GM13977 (cell line): ENCODE measurements at regions of chr3 and their contacts with region 1.

Region 1: GRCh38 chr3:100590114-100590839 is 19.1 kb upstream of the ADGRG7 start:
- DNase-seq: peak; percentile 72
- CTCF ChIP-seq: peak; percentile 75

Region 2: GRCh38 chr3:99842826-99843589 is 747.3 kb before region 1 on chr3:
- in situ Hi-C with region 1: loop called (anchors 25 kb)
- DNase-seq: no peak
- CTCF ChIP-seq: peak; percentile 64

Region 3: DNA sequence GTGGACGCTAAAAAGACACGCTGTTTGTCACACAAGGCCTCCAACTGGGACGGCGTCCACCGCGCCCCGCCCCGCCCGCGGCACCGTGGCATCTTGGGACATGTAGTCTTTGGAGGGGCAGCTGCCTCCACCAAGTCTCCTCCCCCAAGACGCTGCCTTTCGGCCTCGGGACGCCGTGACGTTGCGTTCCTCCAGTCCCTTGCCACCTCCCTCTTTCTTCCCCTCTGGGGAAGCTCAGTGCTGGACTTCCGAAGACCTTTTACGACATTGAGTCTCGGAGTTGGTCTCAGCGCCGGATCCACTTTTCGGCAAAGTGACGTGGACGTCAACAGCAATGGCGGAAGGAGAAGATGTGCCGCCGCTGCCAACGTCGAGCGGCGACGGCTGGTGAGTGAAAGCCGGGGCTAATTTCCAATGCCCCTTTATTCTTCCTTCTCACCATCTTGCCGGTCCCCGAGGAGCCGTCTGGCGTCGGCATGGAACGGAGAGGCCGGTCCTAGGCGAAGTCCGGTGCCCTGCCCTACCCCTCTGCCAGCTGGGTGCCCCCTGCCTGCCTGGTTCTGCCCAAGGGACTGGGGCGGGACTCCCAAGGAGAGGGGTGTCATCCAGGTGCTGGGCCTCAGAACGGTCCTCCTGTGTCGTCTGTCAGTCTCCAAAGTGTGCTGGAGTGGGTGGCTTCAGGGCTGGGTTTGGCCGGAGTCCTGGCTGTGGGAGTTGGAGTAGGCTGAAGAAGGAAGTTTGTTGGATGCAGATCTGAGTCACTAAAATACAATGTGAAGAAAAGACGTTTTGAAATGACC is 329.4 kb before region 1 on chr3 and contains the start of gene TBC1D23:
- in situ Hi-C with region 1: no loop called
- DNase-seq: peak; percentile 95
- CTCF ChIP-seq: no peak

Region 4: GRCh38 chr3:100316641-100317069 is 273.6 kb before region 1 on chr3:
- in situ Hi-C with region 1: loop called (anchors 25 kb)
- DNase-seq: peak; percentile 35
- CTCF ChIP-seq: peak; percentile 68

Region 5: DNA sequence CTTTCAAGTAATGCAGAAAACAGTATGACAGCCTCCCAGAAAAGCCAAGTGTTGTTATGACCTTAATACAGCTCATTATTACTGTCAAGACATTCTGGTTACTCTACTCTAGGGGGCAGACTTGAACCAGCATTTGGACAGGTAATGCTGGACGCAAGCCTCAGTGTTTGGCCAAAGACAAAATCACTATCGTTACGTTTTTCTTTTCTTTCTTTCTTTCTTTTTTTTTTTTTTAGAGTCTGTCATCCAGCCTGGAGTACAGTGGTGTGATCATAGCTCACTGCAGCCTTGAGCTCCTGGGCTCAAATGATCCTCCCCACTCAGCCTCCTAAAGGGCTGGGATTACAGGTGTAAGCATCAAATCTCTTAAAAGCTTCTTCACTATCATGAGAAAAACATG is 127.3 kb before region 1 on chr3:
- in situ Hi-C with region 1: loop called (anchors 5 kb)
- DNase-seq: peak; percentile 68
- CTCF ChIP-seq: peak; percentile 79

Region 6: GRCh38 chr3:100496711-100497261 is 93.5 kb before region 1 on chr3:
- in situ Hi-C with region 1: no loop called
- DNase-seq: peak; percentile 34
- CTCF ChIP-seq: no peak